ENCODE measurements at regions of chr17 and their contacts with region 1.

Region 1: GRCh38 chr17:76153640-76154039 is 12.6 kb upstream of the FOXJ1 start:
- DNase-seq: no peak
- ATAC-seq: no peak
- H3K4me3 Mint-ChIP-seq: peak overlapping the region in 9 of 10 donors; percentile 23 to 95 (median 62)
- H3K27ac Mint-ChIP-seq: peak overlapping the region; percentile 95 to 100 (median 98)
- H3K4me1 Mint-ChIP-seq: peaks cover 31 to 82% (median 65%) of the 10 kb centered on the region in 4 donors
- H3K27me3 Mint-ChIP-seq: no peaks in the 10 kb centered on the region

Region 2: GRCh38 chr17:75284340-75284739 is 869.3 kb before region 1 on chr17:
- POLR2A ChIA-PET with region 1: no interaction called
- DNase-seq: no peak
- ATAC-seq: no peak
- H3K4me3 Mint-ChIP-seq: no peak overlapping the region
- H3K27ac Mint-ChIP-seq: no peak overlapping the region
- H3K4me1 Mint-ChIP-seq: peaks cover 8 to 18% (median 12%) of the 10 kb centered on the region in 4 donors
- H3K27me3 Mint-ChIP-seq: no peaks in the 10 kb centered on the region

Region 3: DNA sequence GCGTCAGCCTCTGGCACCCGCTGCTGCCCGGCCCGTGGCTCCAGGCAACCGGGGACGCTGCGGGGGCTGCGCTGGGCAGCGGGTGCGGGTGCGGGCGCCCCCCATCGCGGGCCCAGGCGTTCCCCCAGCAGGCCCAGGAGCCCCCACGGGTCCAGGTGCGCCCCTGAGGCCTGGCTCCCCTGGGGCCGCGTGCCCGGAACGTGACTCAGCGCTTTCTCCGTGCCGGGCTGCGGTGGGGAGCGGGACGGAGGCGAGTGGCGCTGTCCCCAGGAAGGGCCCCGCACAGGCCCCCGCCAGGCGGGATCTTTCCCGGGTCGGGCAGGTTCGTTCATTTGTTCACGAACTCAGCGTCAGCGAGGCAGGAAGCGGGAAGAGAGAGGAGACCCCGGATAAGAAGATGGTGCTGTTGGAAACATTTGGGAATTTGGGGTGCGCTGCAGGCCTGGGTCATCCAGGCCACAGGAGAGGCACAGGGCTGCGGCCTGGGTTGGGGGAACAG is 31.7 kb before region 1 on chr17:
- POLR2A ChIA-PET with region 1: interaction called, 31 read pairs
- DNase-seq: no peak
- ATAC-seq: peak; percentile 13 to 37
- H3K4me3 Mint-ChIP-seq: peak overlapping the region; percentile 28 to 78 (median 63)
- H3K27ac Mint-ChIP-seq: peak overlapping the region in 8 of 10 donors; percentile 46 to 90 (median 80)
- H3K4me1 Mint-ChIP-seq: peaks cover 18 to 40% (median 31%) of the 10 kb centered on the region in 4 donors
- H3K27me3 Mint-ChIP-seq: no peaks in the 10 kb centered on the region

Region 4: DNA sequence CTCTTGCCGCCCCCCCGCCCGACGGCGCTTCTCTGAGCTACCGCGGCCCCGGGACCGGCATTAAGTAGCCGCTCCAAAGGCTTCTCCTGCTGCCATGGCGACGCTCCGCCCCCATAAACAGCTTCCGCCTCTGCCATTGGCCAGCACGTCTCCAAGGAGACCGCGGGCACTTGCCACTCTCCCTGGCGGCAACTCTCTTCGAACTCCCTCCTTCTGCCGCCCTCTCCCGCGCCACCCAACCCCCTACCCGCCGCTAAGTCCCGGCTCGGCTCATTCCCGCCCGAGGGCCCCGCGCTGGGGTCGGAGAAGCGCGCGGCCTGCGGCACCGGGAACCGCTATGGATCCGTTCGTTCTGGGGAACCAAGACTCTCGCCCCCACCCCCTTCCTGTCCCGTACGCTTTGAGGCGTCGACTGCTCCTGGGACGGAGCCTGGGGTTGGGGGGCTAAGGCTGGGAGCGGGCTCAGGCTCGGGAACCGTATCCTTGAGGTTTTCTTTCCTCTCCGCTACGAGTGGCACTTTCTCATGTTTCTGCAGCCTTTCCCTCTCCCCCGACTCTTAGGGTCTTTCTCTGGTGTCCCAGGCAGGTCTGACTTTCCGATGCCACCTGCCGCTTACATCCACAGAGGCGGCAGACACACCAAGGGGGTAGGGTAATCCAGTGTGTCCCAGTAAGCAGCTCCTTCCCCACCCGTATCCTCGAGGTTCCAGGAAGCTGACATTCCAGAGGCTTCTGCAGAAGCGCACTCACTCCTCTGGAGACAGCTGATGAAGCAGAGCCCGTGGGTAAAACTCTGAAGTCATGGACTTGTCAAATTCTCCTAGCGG is 12.2 kb before region 1 on chr17 and contains the start of gene FOXJ1:
- POLR2A ChIA-PET with region 1: interaction called, 140 read pairs
- DNase-seq: peak; percentile 83 to 98 (median 94)
- ATAC-seq: peak; percentile 60 to 73
- H3K4me3 Mint-ChIP-seq: peak within 1 kb of the TSS; percentile 81 to 92 (median 87)
- H3K27ac Mint-ChIP-seq: peak within 1 kb of the TSS; percentile 92 to 100 (median 97)
- H3K4me1 Mint-ChIP-seq: peaks cover 38 to 73% (median 68%) of the 10 kb centered on the region in 4 donors
- H3K27me3 Mint-ChIP-seq: peaks cover 0 to 2% (median 0%) of the 10 kb centered on the region in 5 donors
- polyA plus RNA-seq, gene FOXJ1: 0.28 to 2.8 (median 1.8) TPM

Region 5: DNA sequence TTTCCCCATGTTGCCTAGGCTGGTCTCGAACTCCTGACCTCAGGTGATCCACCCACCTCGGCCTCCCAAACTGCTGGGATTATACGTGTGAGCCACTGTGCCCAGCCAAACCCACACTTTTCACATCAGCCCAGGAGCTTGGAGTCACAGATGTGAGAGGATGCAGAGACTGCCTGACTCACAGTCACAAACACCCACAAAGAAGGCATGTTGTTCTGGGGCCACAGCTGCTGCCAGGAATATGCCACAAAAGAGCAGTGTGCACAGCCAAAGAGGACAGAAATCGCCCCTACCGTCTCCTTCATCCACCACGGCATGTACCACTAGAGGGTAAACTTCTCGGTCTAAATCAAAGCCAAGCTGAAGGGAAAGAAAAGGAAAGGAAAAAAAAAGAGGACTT is 12.5 kb after region 1 on chr17:
- POLR2A ChIA-PET with region 1: interaction called, 79 read pairs
- DNase-seq: no peak
- ATAC-seq: no peak
- H3K4me3 Mint-ChIP-seq: no peak overlapping the region
- H3K27ac Mint-ChIP-seq: peak overlapping the region in 4 of 10 donors; percentile 4 to 73 (median 36)
- H3K4me1 Mint-ChIP-seq: peaks cover 3 to 27% (median 17%) of the 10 kb centered on the region in 4 donors
- H3K27me3 Mint-ChIP-seq: no peaks in the 10 kb centered on the region

Region 6: GRCh38 chr17:76191896-76192295 is 38.3 kb after region 1 on chr17:
- POLR2A ChIA-PET with region 1: interaction called, 30 read pairs
- DNase-seq: peak in 9 of 10 donors; percentile 20 to 92 (median 69)
- ATAC-seq: peak; percentile 90
- H3K4me3 Mint-ChIP-seq: peak overlapping the region; percentile 56 to 84 (median 78)
- H3K27ac Mint-ChIP-seq: peak overlapping the region; percentile 90 to 99 (median 96)
- H3K4me1 Mint-ChIP-seq: peaks cover 43 to 84% (median 80%) of the 10 kb centered on the region in 4 donors
- H3K27me3 Mint-ChIP-seq: no peaks in the 10 kb centered on the region

Region 7: GRCh38 chr17:76271669-76272540 is 118.3 kb after region 1 on chr17:
- POLR2A ChIA-PET with region 1: interaction called, 34 read pairs
- DNase-seq: peak; percentile 52 to 85 (median 66)
- ATAC-seq: peak; percentile 39 to 50
- H3K4me3 Mint-ChIP-seq: peak overlapping the region; percentile 70 to 91 (median 82)
- H3K27ac Mint-ChIP-seq: peak overlapping the region; percentile 86 to 97 (median 94)
- H3K4me1 Mint-ChIP-seq: peaks cover 34 to 83% (median 74%) of the 10 kb centered on the region in 4 donors
- H3K27me3 Mint-ChIP-seq: no peaks in the 10 kb centered on the region

Measured in naive thymus-derived CD8-positive, alpha-beta T cell (primary cell).